Prostate gland (tissue), 2 donors: ENCODE measurements at regions of chr13 and their contacts with region 1.

Region 1: GRCh38 chr13:41668130-41668757 is 210.9 kb downstream of the RGCC start:
- DNase-seq: peak; percentile 86
- H3K4me3 ChIP-seq: no peak overlapping the region
- H3K27ac ChIP-seq: no peak overlapping the region
- H3K4me1 ChIP-seq: no peaks in the 10 kb centered on the region
- H3K27me3 ChIP-seq: no peaks in the 10 kb centered on the region
- CTCF ChIP-seq: peak; percentile 50 to 95 (median 92)
- POLR2A ChIP-seq: peak; percentile 7

Region 2: DNA sequence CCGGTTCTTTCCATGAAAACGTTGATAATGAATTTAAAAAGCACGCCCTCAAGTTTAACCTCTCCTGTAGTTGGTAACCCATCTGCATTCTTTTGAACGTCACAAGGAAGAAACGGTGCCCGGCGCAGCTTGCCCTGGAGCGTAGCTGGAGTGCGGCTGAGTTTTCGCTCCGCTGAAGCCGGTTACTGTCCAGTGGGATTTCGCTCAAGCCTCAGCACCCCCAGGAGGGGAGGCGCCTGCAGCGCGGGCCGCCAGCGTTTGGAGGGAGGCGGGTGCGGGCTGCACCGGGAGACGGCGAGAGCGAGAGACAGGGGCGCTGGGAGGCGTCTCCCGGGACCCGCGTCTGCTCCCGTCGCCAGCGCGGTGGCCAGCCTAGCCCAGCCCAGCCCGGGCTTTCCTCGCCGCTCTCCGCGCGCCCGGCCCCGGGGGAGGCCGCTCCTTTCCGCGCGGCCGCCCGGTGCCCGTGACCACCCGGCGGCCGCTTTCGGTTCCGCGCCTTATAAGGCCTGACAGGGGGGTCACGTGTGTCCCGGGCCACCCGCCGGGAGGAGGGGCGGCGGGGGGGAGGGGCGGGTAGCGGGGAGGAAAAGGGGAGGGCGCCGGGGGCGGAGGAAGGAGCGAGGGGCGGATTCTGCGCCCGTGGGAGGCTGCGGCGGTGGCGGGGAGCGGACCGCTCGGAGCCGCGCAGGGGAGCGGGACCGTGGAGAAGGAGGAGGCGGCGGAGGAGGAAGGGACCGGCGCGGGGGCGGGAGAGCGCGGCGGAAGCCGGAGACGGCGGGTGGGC is 371.9 kb after region 1 on chr13:
- intact Hi-C with region 1: loop called (anchors 5 kb)
- DNase-seq: peak; percentile 87
- H3K4me3 ChIP-seq: peak overlapping the region; percentile 82 to 90
- H3K27ac ChIP-seq: peak overlapping the region; percentile 96 to 97
- H3K4me1 ChIP-seq: peaks cover 3% of the 10 kb centered on the region
- H3K27me3 ChIP-seq: no peaks in the 10 kb centered on the region
- CTCF ChIP-seq: peak in 2 of 4 experiments; percentile 21 to 34
- POLR2A ChIP-seq: peak; percentile 92

Region 3: DNA sequence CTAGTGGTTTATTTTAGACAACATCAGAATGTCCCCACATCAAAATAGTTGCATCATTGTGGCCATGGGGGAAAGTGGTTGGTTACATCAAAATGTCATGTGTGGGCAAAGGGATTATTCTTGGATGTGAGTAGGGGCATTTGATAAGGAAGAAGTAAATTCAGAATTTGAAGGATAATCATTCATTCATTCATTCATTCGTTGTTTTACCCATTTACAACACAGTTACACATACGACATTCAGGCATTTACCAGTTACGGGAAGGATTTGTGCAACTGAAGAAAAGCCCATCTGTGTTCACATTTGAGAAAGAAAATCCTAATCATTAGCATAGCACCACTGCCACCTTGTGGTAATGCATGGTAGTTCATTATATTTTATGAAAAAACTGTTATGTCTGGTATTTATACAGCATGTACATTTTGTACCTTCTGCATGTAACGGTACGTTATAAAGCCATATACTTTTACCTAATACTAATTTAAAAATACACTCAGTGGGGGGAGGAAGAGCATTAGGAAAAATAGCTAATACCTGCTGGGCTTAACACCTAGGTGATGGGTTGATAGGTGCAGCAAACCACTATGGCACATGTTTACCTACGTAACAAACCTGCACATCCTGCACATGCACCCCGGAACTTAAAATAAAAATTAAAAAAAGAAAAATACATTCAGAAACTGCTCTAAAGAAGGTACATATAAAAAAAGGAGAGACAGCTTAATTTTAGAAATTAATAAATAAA is 442.3 kb after region 1 on chr13:
- intact Hi-C with region 1: loop called (anchors 2 kb)
- DNase-seq: peak; percentile 44
- H3K4me3 ChIP-seq: no peak overlapping the region
- H3K27ac ChIP-seq: no peak overlapping the region
- H3K4me1 ChIP-seq: no peaks in the 10 kb centered on the region
- H3K27me3 ChIP-seq: no peaks in the 10 kb centered on the region
- CTCF ChIP-seq: peak; percentile 85 to 96 (median 91)
- POLR2A ChIP-seq: no peak